ENCODE measurements at regions of chr9 and their contacts with region 1.

Region 1: GRCh38 chr9:97710356-97711222 is 13.4 kb upstream of the XPA start:
- DNase-seq: peak in 3 of 5 donors; percentile 27 to 50 (median 35)
- ATAC-seq: peak; percentile 47 to 88 (median 85)
- H3K4me3 ChIP-seq: no peak overlapping the region
- H3K27ac ChIP-seq: no peak overlapping the region
- H3K4me1 ChIP-seq: peaks cover 0 to 7% (median 0%) of the 10 kb centered on the region in 12 donors
- H3K27me3 ChIP-seq: peaks cover 0 to 37% (median 2%) of the 10 kb centered on the region in 9 donors
- CTCF ChIP-seq: peak; percentile 75 to 90 (median 86)
- POLR2A ChIP-seq: no peak

Region 2: GRCh38 chr9:97615439-97616072 is 95.0 kb before region 1 on chr9:
- intact Hi-C with region 1: no loop called
- DNase-seq: peak in 2 of 5 donors; percentile 46 to 58
- ATAC-seq: peak in 3 of 4 donors; percentile 63 to 75 (median 71)
- H3K4me3 ChIP-seq: no peak overlapping the region
- H3K27ac ChIP-seq: peak overlapping the region in 1 of 12 donors; percentile 41
- H3K4me1 ChIP-seq: peaks cover 0 to 10% (median 2%) of the 10 kb centered on the region in 12 donors
- H3K27me3 ChIP-seq: no peaks in the 10 kb centered on the region
- CTCF ChIP-seq: peak; percentile 71 to 90 (median 84)
- POLR2A ChIP-seq: no peak

Region 3: DNA sequence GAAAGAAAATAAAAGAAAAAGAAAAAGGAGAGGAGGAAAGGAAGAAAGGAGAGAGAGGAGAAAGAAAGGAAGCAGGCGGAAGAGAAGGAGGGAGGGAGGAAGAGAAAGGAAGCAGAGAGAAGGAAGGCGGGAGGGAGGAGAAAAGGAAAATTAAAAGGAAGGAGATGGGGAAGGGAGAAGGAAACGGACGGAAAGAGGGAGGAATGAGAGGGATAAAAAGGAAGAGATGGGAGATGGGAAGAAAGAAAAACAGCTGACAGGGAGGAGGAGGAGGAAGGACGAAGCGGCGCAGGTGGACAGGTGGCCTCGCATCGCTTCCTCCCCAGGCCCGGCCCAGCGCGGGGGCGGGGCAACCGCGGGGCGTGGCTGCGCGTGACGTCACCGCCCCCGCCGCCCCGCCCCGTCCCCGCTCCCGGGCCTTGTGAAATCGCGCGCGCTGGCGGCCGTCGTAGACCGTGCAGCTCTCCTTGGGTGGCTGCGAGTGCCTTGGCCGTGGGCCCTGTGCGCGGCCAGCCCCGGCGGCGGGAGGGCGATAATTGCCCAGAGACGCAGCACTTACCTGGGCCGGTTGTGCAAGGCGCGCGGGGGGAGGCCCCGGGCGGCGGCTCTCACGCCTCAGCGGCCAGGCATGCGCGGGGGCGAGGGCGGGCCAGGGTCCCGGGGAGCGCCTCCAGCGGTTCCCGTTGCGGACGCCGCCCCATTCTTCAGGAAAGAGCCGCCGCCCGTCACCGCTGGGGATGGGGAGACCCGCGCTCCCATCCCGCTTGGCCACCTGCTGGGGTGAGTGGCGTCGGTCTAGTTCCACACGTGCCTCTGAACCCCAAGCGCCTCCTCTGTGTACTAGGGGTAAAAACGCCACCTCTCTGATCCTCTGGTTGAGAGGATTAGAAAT is 92.8 kb after region 1 on chr9:
- intact Hi-C with region 1: loop called in 1 of 10 experiments (anchors 5 kb)
- DNase-seq: peak; percentile 26 to 85 (median 63)
- ATAC-seq: peak; percentile 42 to 98 (median 92)
- H3K4me3 ChIP-seq: peak overlapping the region; percentile 26 to 59 (median 42)
- H3K27ac ChIP-seq: no peak overlapping the region
- H3K4me1 ChIP-seq: peaks cover 0 to 11% (median 5%) of the 10 kb centered on the region in 12 donors
- H3K27me3 ChIP-seq: peaks cover 5 to 72% (median 25%) of the 10 kb centered on the region in 9 donors
- CTCF ChIP-seq: no peak
- POLR2A ChIP-seq: no peak

Region 4: DNA sequence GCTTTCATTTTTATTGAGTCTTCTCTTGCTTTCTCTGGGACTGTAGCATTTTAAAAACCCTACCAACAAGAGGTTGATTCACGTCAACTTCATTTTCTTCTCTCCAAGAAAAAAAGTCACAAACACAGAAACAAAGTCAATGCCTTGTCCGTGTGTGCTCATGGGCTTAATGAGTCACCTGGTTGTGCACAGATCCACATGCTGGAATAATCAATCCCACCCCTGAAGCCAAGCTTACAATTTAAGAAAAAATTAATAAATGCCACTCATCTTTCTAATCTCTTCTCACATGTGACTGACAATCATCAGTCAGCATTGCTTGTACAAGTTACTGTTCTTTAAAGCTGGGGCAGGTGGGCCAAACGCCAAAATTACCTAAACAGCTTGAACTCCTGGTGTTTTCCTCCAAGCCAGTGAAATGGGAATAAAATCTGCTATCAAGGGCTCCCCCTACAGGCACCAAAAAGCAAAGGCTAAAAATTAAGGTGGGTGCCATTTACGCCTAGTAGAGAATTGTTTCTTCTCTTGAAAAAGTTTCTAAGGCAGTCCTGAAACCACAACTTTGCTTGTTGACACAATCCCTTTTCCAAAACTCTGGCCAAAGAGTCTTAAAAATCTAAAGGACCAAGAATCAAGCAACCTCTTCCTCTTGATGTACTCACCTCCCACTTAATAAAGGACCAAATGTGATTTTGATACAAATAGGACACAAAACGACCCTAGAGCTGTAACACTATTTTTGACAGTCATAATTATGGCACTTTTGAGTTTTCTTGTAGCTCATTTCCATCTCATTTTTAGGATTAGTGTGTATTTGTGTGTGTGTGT is 190.4 kb after region 1 on chr9:
- intact Hi-C with region 1: loop called (anchors 1 to 5 kb)
- DNase-seq: no peak
- ATAC-seq: peak in 1 of 4 donors; percentile 50
- H3K4me3 ChIP-seq: no peak overlapping the region
- H3K27ac ChIP-seq: no peak overlapping the region
- H3K4me1 ChIP-seq: peaks cover 0 to 14% (median under 1%) of the 10 kb centered on the region in 12 donors
- H3K27me3 ChIP-seq: no peaks in the 10 kb centered on the region
- CTCF ChIP-seq: peak; percentile 53 to 77 (median 70)
- POLR2A ChIP-seq: no peak